ENCODE measurements at regions of chr11 and their contacts with region 1.

Region 1: DNA sequence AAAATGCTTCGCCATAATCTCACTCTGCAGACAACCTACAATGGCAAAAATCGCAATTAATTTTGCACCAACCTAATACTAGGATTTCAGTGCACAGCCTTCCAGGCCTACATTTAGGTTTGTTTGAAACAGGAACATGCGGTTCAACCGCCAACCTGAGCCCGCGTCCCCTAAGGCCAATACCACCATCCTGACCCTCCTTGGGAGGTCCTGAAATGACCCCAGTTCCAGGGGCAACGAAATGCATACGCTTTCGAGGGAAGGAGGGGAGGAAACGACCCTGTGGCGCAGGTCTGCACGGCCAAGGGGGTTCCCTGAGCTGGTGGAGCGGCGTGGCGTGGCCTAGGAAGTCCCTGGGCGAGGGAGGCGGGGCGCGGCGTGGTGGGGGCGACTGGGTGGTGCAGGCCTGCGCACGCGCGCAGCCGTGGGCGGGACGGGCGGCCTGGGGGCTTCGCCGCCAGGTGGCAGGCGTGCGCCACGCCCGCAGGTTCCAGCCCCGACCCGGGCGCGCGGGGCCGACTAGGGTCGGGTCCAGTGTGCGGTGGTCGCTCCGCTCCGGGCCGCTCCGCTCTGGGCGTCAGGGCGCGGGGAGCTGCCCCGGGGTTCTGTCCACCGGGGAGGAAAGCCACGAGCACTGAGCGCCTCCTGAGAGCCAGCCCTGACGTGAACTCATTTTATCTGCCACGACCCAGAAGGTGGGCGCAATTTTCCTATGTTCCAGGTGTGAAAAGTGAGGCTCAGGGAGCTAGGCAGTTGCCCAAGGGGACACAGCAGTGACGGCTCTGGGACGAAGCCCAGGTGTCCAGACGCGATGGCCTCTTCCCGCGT is 94.1 kb downstream of the SWAP70 start:
- DNase-seq: peak; percentile 87 to 93
- H3K4me3 ChIP-seq: peak overlapping the region; percentile 57 to 91
- H3K27ac ChIP-seq: peak overlapping the region; percentile 93 to 99
- H3K4me1 ChIP-seq: peaks cover 7 to 60% (median 29%) of the 10 kb centered on the region in 4 donors
- H3K27me3 ChIP-seq: no peaks in the 10 kb centered on the region
- CTCF ChIP-seq: peak; percentile 82 to 98

Region 2: GRCh38 chr11:9972989-9973388 is 215.0 kb after region 1 on chr11:
- intact Hi-C with region 1: loop called (anchors 5 kb)
- DNase-seq: no peak
- H3K4me3 ChIP-seq: no peak overlapping the region
- H3K27ac ChIP-seq: no peak overlapping the region
- H3K4me1 ChIP-seq: peaks cover 0 to 8% (median 0%) of the 10 kb centered on the region in 4 donors
- H3K27me3 ChIP-seq: no peaks in the 10 kb centered on the region
- CTCF ChIP-seq: peak; percentile 59 to 79

Region 3: GRCh38 chr11:10307442-10308207 is 549.6 kb after region 1 on chr11:
- intact Hi-C with region 1: loop called (anchors 5 kb)
- DNase-seq: peak; percentile 88 to 94
- H3K4me3 ChIP-seq: peak overlapping the region; percentile 57 to 58
- H3K27ac ChIP-seq: peak overlapping the region; percentile 72 to 79
- H3K4me1 ChIP-seq: peaks cover 0 to 60% (median 40%) of the 10 kb centered on the region in 4 donors
- H3K27me3 ChIP-seq: no peaks in the 10 kb centered on the region
- CTCF ChIP-seq: peak; percentile 97 to 100

Region 4: GRCh38 chr11:10322830-10323792 is 565.1 kb after region 1 on chr11:
- intact Hi-C with region 1: loop called (anchors 5 kb)
- DNase-seq: peak; percentile 80 to 83
- H3K4me3 ChIP-seq: peak overlapping the region in 1 of 2 donors; percentile 0
- H3K27ac ChIP-seq: peak overlapping the region; percentile 70 to 82
- H3K4me1 ChIP-seq: peaks cover 5 to 62% (median 32%) of the 10 kb centered on the region in 4 donors
- H3K27me3 ChIP-seq: no peaks in the 10 kb centered on the region
- CTCF ChIP-seq: peak; percentile 58 to 82

Measured in tibial artery (tissue), 4 donors.